Mammary epithelial cell (primary cell): ENCODE measurements at regions of chr12 and their contacts with region 1.

Region 1: GRCh38 chr12:62724947-62725447 is 210.0 kb downstream of the PPM1H start:
- DNase-seq: peak; percentile 99
- H3K4me3 ChIP-seq: peak overlapping the region in 1 of 3 experiments; percentile 13
- H3K27ac ChIP-seq: peak overlapping the region; percentile 93
- H3K4me1 ChIP-seq: peaks cover 35% of the 10 kb centered on the region
- H3K27me3 ChIP-seq: no peaks in the 10 kb centered on the region
- CTCF ChIP-seq: no peak

Region 2: GRCh38 chr12:62588916-62589315 is 136.1 kb before region 1 on chr12:
- CTCF ChIA-PET with region 1: no interaction called
- dilution Hi-C with region 1: no loop called
- in situ Hi-C with region 1: no loop called
- intact Hi-C with region 1: no loop called
- DNase-seq: no peak
- H3K4me3 ChIP-seq: no peak overlapping the region
- H3K27ac ChIP-seq: no peak overlapping the region
- H3K4me1 ChIP-seq: no peaks in the 10 kb centered on the region
- H3K27me3 ChIP-seq: no peaks in the 10 kb centered on the region
- CTCF ChIP-seq: no peak

Region 3: GRCh38 chr12:62703011-62703380 is 22.0 kb before region 1 on chr12:
- CTCF ChIA-PET with region 1: no interaction called
- dilution Hi-C with region 1: no loop called
- in situ Hi-C with region 1: no loop called
- intact Hi-C with region 1: loop called (anchors 1 kb)
- DNase-seq: peak; percentile 80
- H3K4me3 ChIP-seq: no peak overlapping the region
- H3K27ac ChIP-seq: peak overlapping the region; percentile 71
- H3K4me1 ChIP-seq: peaks cover 38% of the 10 kb centered on the region
- H3K27me3 ChIP-seq: no peaks in the 10 kb centered on the region
- CTCF ChIP-seq: no peak

Region 4: DNA sequence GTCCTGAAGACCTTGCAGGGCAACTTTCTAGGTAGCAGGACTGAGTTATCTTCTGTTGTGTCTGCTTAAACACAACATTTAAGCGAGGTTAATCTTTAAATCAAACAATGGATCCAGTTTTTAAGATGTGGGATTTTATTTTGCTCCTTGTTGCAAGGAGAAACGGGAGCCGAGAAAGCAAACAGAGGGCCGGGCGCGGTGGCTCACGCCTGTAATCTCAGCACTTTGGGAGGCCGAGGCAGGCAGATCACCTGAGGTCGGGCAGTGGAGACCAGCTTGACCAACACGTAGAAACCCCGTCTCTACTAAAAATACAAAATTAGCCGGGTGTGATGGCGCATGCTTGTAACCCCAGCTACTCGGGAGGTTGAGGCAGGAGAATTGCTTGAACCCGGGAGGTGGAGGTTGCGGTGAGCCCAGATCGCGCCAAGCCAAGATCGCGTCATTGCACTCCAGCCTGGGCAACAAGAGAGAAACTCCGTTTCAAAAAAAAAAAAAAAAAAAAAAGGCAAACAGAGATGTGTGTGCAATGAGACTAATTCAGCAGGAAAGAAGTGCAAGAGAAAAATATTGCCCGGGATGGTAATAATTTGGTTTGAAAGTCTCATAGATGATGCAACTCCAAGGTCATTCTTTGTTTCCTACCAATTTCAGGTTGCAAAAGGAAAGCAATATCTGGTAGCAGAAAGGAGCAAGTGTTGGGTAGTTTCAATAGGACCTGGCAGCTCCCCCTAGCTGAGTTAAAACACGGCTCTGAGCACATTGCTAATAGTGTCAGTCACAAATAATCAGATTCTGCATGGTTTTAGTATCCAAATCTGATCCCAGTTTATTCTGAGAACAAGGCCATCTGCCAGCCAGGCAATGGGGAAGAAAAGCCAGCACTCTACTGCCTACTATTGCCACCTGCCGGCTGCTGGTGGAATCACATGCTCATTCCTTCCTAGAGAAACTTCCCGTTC is 68.5 kb after region 1 on chr12:
- CTCF ChIA-PET with region 1: no interaction called
- dilution Hi-C with region 1: no loop called
- in situ Hi-C with region 1: no loop called
- intact Hi-C with region 1: loop called (anchors 2 kb)
- DNase-seq: peak; percentile 67
- H3K4me3 ChIP-seq: no peak overlapping the region
- H3K27ac ChIP-seq: no peak overlapping the region
- H3K4me1 ChIP-seq: peaks cover 5% of the 10 kb centered on the region
- H3K27me3 ChIP-seq: no peaks in the 10 kb centered on the region
- CTCF ChIP-seq: peak; percentile 95 to 96

Region 5: DNA sequence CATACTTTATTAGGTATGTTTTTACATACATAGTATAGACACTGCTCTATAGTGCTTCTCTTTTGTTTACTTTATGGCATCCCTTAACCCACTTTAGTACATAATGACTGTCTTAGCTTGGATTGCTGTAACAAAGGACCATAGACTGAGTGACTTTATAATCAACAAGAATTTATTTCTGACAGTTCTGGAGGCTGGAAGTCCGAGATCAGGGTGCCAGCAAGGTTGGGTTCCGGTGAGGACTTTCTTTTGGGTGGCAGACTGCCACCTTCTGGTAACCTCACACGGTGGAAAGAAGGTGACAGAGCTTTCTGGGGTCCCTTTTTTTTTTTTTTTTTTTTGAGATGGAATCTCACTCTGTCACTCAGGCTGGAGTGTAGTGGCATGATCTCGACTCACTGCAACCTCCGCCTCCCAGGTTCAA is 258.6 kb after region 1 on chr12:
- CTCF ChIA-PET with region 1: no interaction called
- dilution Hi-C with region 1: no loop called
- in situ Hi-C with region 1: no loop called
- intact Hi-C with region 1: no loop called
- DNase-seq: no peak
- H3K4me3 ChIP-seq: no peak overlapping the region
- H3K27ac ChIP-seq: no peak overlapping the region
- H3K4me1 ChIP-seq: no peaks in the 10 kb centered on the region
- H3K27me3 ChIP-seq: peaks cover 3% of the 10 kb centered on the region
- CTCF ChIP-seq: peak in 1 of 2 donors; percentile 29